Right lobe of liver (tissue), 6 donors: ENCODE measurements at regions of chr17 and their contacts with region 1.

Region 1: GRCh38 chr17:57455063-57455914 is 199.0 kb downstream of the MSI2 start:
- DNase-seq: peak in 1 of 3 donors; percentile 4
- ATAC-seq: peak in 1 of 4 donors; percentile 15
- H3K4me3 ChIP-seq: no peak overlapping the region
- H3K27ac ChIP-seq: no peak overlapping the region
- H3K4me1 ChIP-seq: peaks cover 0 to 5% (median 0%) of the 10 kb centered on the region in 4 donors
- H3K27me3 ChIP-seq: no peaks in the 10 kb centered on the region
- CTCF ChIP-seq: no peak
- POLR2A ChIP-seq: no peak

Region 2: GRCh38 chr17:57350277-57350676 is 105.0 kb before region 1 on chr17:
- intact Hi-C with region 1: no loop called
- DNase-seq: peak in 2 of 3 donors; percentile 61 to 75
- ATAC-seq: peak; percentile 36 to 81 (median 66)
- H3K4me3 ChIP-seq: no peak overlapping the region
- H3K27ac ChIP-seq: no peak overlapping the region
- H3K4me1 ChIP-seq: no peaks in the 10 kb centered on the region
- H3K27me3 ChIP-seq: no peaks in the 10 kb centered on the region
- CTCF ChIP-seq: no peak
- POLR2A ChIP-seq: no peak

Region 3: DNA sequence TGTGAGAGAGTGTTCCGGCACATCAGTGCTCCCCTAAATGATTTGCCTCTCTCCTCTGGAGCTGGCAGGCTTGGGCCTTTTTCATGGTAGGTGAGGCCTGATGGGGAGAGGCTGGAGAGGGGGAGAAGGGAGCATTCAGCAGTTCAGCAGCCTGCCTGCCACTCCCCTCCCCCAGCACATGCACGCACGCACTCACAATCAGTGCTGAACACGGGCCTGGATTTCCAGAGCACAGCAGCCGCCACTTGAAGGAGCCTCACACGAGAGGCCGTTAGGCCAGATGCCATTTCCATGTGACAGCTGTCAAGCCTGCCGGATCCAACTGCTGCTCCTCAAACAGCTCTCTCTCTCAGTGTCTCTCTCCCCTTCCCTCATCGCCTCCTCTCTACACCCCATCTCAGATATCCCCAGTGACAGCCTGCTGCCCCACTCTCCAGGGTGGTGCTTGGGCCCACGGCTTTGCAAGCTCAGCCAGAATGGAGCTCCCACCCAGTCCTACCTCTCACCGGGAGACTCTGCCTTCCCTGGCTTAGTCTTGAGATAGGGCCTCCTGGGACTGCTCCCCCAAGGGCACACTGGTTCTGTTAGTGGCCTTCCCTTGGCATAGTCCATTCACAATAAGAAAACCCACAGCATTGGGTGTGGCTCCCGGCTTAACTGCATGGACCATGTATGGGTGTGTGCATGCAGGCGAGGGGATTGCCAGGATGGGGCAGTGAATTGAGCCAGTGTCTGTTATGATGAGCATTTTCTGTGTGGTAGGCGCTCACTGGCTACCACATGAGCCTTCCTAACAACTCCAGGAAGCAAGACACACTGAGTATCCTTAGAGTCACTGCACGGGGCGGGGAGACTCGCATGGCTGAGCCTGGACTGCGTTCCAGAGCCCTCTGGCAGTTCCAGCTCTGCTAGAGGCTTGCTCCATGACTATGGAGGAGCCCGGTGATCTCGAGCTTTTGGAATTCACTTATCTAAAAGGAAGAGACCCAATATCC is 63.6 kb after region 1 on chr17:
- intact Hi-C with region 1: loop called in 1 of 2 experiments (anchors 10 kb)
- DNase-seq: no peak
- ATAC-seq: peak in 1 of 4 donors; percentile 8
- H3K4me3 ChIP-seq: no peak overlapping the region
- H3K27ac ChIP-seq: no peak overlapping the region
- H3K4me1 ChIP-seq: peaks cover 0 to 32% (median 2%) of the 10 kb centered on the region in 4 donors
- H3K27me3 ChIP-seq: no peaks in the 10 kb centered on the region
- CTCF ChIP-seq: no peak
- POLR2A ChIP-seq: no peak

Region 4: DNA sequence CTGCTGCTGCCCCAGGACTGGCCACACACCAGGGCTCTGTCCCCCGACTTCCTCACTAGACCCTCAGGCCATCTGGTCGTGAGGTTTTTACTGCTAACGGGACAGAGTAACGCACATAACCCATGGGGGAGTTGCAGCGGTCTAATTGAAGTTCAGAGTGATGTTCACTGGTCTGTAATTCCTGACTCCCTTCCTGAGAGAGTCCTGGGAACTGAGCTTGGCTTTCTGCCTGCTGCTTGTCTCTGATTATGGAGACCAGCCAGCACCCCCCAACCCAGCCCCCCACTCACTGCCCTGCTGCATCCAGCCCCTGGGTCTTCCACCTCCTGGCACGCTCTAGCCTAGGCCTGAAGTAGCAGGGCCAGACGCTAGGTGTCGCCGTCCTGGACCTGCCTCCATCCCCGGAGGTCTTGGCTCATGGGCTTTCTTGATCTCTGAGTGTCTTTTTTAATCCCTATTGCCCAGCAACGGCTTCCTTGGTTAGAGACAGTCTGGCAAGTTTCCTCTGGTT is 96.9 kb after region 1 on chr17:
- intact Hi-C with region 1: no loop called
- DNase-seq: no peak
- ATAC-seq: no peak
- H3K4me3 ChIP-seq: no peak overlapping the region
- H3K27ac ChIP-seq: no peak overlapping the region
- H3K4me1 ChIP-seq: no peaks in the 10 kb centered on the region
- H3K27me3 ChIP-seq: no peaks in the 10 kb centered on the region
- CTCF ChIP-seq: peak in 3 of 4 donors; percentile 13 to 23 (median 17)
- POLR2A ChIP-seq: no peak